Activated CD4-positive, alpha-beta memory T cell treated with anti-CD3 and anti-CD28 coated beads for 36 hours (primary cell): ENCODE measurements at regions of chr2 and their contacts with region 1.

Region 1: GRCh38 chr2:134118279-134119116 is 135.4 kb upstream of the MGAT5 start:
- DNase-seq: peak; percentile 91
- H3K4me3 Mint-ChIP-seq: peak overlapping the region; percentile 95
- H3K27ac Mint-ChIP-seq: no peak overlapping the region
- H3K4me1 Mint-ChIP-seq: peaks cover 35% of the 10 kb centered on the region
- H3K27me3 Mint-ChIP-seq: peaks cover 4% of the 10 kb centered on the region

Region 2: GRCh38 chr2:134014196-134014960 is 104.1 kb before region 1 on chr2:
- CTCF ChIA-PET with region 1: no interaction called
- POLR2A ChIA-PET with region 1: no interaction called
- intact Hi-C with region 1: no loop called
- DNase-seq: no peak
- H3K4me3 Mint-ChIP-seq: no peak overlapping the region
- H3K27ac Mint-ChIP-seq: no peak overlapping the region
- H3K4me1 Mint-ChIP-seq: no peaks in the 10 kb centered on the region
- H3K27me3 Mint-ChIP-seq: no peaks in the 10 kb centered on the region

Region 3: GRCh38 chr2:134169788-134170187 is 51.3 kb after region 1 on chr2:
- CTCF ChIA-PET with region 1: interaction called, 11 read pairs
- POLR2A ChIA-PET with region 1: interaction called, 7 read pairs
- intact Hi-C with region 1: loop called (anchors 1 kb)
- DNase-seq: peak; percentile 59
- H3K4me3 Mint-ChIP-seq: no peak overlapping the region
- H3K27ac Mint-ChIP-seq: peak overlapping the region; percentile 68
- H3K4me1 Mint-ChIP-seq: peaks cover 84% of the 10 kb centered on the region
- H3K27me3 Mint-ChIP-seq: no peaks in the 10 kb centered on the region

Region 4: GRCh38 chr2:134218930-134219658 is 100.6 kb after region 1 on chr2:
- CTCF ChIA-PET with region 1: interaction called, 20 read pairs
- POLR2A ChIA-PET with region 1: interaction called, 16 read pairs
- intact Hi-C with region 1: no loop called
- DNase-seq: peak; percentile 56
- H3K4me3 Mint-ChIP-seq: peak overlapping the region; percentile 49
- H3K27ac Mint-ChIP-seq: peak overlapping the region; percentile 74
- H3K4me1 Mint-ChIP-seq: peaks cover 67% of the 10 kb centered on the region
- H3K27me3 Mint-ChIP-seq: no peaks in the 10 kb centered on the region

Region 5: GRCh38 chr2:134253804-134254203 is 135.3 kb after region 1 on chr2 and contains the start of gene MGAT5:
- CTCF ChIA-PET with region 1: interaction called, 37 read pairs
- POLR2A ChIA-PET with region 1: interaction called, 8 read pairs
- intact Hi-C with region 1: loop called (anchors 1 kb)
- DNase-seq: no peak
- H3K4me3 Mint-ChIP-seq: no peak within 1 kb of the TSS
- H3K27ac Mint-ChIP-seq: no peak within 1 kb of the TSS
- H3K4me1 Mint-ChIP-seq: peaks cover 84% of the 10 kb centered on the region
- H3K27me3 Mint-ChIP-seq: no peaks in the 10 kb centered on the region
- total RNA-seq, gene MGAT5: 33.6 to 38.3 TPM

Region 6: DNA sequence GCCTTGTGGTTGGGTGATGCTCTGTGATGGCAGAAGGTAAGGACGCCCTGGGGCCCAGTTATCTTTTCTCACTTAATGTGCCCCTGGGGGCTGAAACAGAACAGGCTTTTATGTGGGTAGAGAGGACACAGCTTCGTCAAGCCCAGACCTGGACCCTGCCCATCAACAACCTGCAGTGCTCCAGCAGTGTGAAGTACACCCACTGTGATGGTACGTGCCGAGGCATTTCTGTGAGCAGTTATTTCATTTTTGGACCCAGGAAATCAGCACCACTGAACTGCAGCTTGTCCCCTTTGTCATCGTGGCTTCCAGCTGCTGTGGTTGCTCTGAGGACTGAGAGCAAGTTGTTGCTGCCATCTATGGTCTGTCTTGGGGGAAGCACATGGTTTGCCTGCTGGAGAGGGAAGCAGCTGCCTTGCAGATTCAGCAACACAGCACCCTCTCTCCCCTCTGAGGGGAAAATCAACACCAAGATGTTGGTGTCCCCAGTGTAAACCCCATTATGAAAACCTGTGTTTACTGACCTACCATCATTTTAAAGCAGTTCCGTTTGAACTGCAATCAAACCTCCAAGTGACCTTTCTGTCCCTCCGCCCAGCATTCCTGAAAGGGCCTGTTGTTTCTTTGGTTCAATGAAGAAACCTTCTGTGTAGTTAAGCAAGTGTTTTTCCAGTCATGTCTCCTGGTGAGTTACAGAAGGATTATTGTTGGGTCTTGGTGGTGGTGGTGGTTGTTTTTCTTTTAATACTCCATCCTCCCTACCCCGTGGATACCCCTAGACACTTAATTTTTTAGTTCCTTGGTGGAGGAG is 293.5 kb after region 1 on chr2:
- CTCF ChIA-PET with region 1: interaction called, 97 read pairs
- POLR2A ChIA-PET with region 1: interaction called, 8 read pairs
- intact Hi-C with region 1: loop called (anchors 1 kb)
- DNase-seq: peak; percentile 78
- H3K4me3 Mint-ChIP-seq: no peak overlapping the region
- H3K27ac Mint-ChIP-seq: no peak overlapping the region
- H3K4me1 Mint-ChIP-seq: peaks cover 35% of the 10 kb centered on the region
- H3K27me3 Mint-ChIP-seq: no peaks in the 10 kb centered on the region

Region 7: DNA sequence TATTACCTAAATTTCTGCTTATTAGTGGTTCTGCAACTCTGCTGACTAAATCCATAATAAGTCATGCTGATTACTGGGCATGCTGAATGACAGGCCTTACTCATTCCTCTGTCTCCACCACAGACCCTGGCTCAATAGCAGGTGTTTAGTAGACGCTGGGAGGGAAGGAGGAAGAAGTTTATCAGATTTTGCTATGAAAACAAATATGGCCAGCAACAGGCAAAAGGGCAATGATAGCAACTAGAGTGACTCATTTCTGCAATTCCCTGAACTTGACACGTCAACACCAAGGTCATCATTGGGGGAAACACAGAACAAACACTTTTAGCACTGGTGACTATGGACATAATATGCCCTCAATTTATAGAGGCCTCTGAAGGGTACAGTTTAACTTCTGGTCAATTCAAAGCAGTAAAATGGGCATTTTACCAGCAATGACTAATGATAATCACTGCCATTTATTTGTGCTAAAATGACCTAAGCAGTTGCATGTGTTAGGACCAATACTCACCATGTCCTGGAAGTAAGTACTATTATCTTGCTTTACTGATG is 565.1 kb after region 1 on chr2:
- CTCF ChIA-PET with region 1: no interaction called
- POLR2A ChIA-PET with region 1: no interaction called
- intact Hi-C with region 1: loop called (anchors 10 kb)
- DNase-seq: peak; percentile 59
- H3K4me3 Mint-ChIP-seq: no peak overlapping the region
- H3K27ac Mint-ChIP-seq: no peak overlapping the region
- H3K4me1 Mint-ChIP-seq: peaks cover 46% of the 10 kb centered on the region
- H3K27me3 Mint-ChIP-seq: peaks cover 9% of the 10 kb centered on the region